Left cardiac atrium (tissue), 4 donors: ENCODE measurements at regions of chr17 and their contacts with region 1.

Region 1: GRCh38 chr17:68260051-68260762 is 12.4 kb downstream of the AMZ2 start:
- DNase-seq: no peak
- ATAC-seq: no peak

Region 2: DNA sequence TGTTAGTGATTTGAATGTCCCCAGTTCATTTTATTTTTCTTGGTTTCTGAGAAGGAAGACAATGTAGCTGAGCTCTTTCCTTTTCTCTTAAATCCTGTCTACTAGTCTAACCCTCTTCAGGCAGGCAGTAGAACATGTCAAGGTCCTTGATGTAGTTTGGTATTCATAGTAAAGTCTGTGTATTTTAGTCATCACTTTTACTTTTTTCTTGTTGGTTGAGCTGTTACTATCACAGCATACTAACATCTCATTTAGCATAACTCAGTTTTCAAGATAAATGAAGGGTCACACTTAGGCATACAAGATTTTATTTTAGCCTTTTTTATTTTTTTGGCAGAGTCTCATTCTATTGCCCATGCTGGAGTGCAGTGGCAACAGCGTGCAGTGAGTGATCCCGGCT is 154.1 kb before region 1 on chr17:
- intact Hi-C with region 1: no loop called
- DNase-seq: no peak
- ATAC-seq: no peak

Region 3: DNA sequence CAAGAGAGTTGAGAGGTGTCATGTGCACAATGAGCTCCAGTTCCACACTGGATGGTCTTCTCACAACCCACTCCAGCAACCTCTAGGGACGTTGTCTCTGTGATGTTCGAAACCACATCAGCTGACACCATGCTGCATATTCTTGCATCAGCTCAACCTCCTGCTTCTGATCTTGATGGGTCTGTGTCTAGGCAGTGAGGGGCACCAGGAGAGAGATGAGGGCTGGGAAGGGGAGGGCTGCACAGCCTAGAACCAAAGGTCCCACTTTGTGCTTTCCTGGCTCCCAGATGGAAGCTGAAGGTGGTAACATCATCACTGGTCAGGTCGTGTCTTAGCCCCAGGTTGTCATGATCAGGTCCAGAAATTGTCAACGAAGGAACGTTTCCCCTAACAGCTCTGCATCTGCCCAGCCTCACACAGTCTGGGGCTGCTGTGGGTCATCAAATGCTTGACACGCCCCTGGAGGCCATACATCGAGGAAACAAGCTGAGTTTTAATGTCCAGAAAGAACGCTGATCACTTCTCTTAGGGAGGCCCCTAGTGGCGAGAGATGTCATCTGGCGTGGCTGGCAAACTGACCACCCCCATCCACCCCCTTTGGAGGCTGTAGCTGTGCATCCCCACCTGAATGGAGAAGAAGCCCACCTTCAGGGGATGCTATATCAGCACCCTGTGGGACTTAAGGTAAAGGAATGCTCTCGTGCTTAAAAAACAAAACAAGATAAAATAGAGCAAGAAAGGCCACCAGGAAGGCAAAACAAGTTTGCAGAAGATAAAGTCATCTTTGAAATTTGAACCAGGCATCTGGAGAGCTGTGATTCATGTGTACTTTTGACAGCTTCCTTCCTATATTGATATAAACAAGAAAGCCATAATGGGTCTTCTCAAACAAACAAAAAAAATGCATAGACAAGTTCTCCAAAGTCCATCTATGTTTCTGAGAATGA is 138.8 kb after region 1 on chr17:
- intact Hi-C with region 1: loop called (anchors 5 kb)
- DNase-seq: peak; percentile 64
- ATAC-seq: peak; percentile 70 to 83

Region 4: DNA sequence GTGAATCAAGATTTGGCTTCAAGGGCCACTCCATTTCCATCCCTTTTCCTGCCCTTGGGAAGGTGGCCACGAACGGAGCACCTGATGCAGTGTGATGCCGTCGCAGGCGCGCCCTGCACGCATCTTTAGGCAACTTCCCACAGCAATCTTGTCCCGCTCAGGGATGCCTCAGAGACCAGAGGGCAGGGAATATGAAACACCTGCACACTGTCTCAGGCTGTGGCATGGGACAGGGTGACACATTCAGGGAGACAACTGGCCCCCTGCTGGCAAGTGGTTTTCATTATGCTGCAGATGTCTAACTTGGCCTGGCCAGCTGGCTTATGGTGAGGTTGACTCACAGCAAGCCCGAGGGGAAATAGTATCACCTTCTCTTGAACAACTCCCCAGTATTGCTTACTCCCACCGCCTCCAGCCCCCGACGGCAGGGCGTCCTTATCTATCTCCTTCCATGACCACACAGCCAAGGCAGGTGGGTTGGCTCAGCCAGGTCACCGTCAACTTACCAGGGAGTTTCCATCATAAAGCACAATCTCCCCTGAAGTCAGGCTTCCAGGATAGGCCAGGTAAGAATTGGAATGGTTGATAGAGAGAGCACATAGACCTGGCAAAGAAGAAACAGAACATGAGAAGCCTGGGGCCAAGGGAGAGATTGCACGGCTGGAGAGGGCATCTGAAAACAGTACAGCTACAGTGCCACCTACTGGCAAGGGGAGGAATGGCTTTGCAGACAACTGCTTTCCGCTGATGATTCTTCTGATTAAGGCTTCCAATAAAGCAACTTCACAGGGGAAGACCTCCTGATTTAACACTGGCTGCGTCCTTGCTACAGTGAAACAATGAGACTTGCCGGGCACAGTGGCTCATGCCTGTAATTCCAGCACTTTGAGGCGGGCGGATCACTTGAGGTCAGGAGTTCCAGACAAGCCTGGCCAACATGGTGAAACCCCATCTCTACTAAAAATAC is 176.0 kb after region 1 on chr17:
- intact Hi-C with region 1: loop called (anchors 5 to 10 kb)
- DNase-seq: peak; percentile 78
- ATAC-seq: peak; percentile 56 to 70